CD4-positive, alpha-beta T cell (primary cell): ENCODE measurements at regions of chr4 and their contacts with region 1.

Region 1: DNA sequence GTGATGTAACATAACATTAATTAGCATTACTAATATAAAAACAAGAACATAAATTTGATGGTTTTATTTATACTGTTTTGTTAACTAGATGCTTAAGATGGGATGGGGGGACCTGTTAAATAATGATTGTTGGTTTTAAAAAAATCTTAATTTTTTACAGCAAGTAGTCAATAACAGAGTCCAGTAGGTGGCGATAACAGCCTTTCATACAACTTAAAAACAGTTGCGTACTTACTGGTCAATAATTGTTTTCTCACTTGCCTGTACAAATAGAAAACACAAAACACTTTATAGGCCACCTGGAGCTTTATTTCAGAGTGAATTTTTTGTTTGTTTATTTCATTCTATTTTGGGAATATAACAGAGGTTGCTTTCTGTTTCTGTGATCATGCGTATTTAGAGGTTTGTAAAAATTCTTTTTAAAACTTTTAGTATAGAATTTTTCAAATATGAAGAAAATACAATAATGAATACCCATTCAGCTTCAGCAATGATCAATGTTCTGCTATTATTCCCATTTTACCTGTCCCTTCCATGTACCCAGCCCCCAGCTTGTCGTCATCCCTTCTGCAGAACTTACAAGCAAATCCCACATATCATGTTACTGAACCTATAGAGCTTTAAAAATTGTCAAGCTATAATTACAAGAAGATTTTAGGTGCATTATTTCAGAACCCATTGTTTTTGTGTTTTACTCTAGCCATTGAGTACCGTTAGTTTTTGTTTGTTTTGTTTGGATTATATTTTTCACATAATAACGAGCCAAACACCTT is 97.1 kb downstream of the MRPL1 start:
- DNase-seq: peak in 3 of 14 experiments; percentile 30 to 54 (median 45)
- ATAC-seq: no peak
- H3K4me3 ChIP-seq: no peak overlapping the region
- H3K4me3 Mint-ChIP-seq: no peak overlapping the region
- H3K27ac ChIP-seq: no peak overlapping the region
- H3K27ac Mint-ChIP-seq: no peak overlapping the region
- H3K4me1 ChIP-seq: no peaks in the 10 kb centered on the region
- H3K4me1 Mint-ChIP-seq: peaks cover 7% of the 10 kb centered on the region
- H3K27me3 ChIP-seq: no peaks in the 10 kb centered on the region
- H3K27me3 Mint-ChIP-seq: no peaks in the 10 kb centered on the region
- CTCF ChIP-seq: peak; percentile 72

Region 2: GRCh38 chr4:77765720-77766119 is 194.0 kb before region 1 on chr4:
- CTCF ChIA-PET with region 1: no interaction called
- POLR2A ChIA-PET with region 1: no interaction called
- intact Hi-C with region 1: no loop called
- DNase-seq: no peak
- ATAC-seq: no peak
- H3K4me3 ChIP-seq: no peak overlapping the region
- H3K4me3 Mint-ChIP-seq: no peak overlapping the region
- H3K27ac ChIP-seq: no peak overlapping the region
- H3K27ac Mint-ChIP-seq: peak overlapping the region; percentile 51
- H3K4me1 ChIP-seq: no peaks in the 10 kb centered on the region
- H3K4me1 Mint-ChIP-seq: peaks cover 53% of the 10 kb centered on the region
- H3K27me3 ChIP-seq: no peaks in the 10 kb centered on the region
- H3K27me3 Mint-ChIP-seq: no peaks in the 10 kb centered on the region
- CTCF ChIP-seq: no peak

Region 3: GRCh38 chr4:78268597-78268996 is 308.8 kb after region 1 on chr4:
- CTCF ChIA-PET with region 1: no interaction called
- POLR2A ChIA-PET with region 1: no interaction called
- intact Hi-C with region 1: loop called in 1 of 2 experiments (anchors 2 kb)
- DNase-seq: no peak
- ATAC-seq: no peak
- H3K4me3 ChIP-seq: no peak overlapping the region
- H3K4me3 Mint-ChIP-seq: no peak overlapping the region
- H3K27ac ChIP-seq: no peak overlapping the region
- H3K27ac Mint-ChIP-seq: no peak overlapping the region
- H3K4me1 ChIP-seq: no peaks in the 10 kb centered on the region
- H3K4me1 Mint-ChIP-seq: no peaks in the 10 kb centered on the region
- H3K27me3 ChIP-seq: no peaks in the 10 kb centered on the region
- H3K27me3 Mint-ChIP-seq: peaks cover 6% of the 10 kb centered on the region
- CTCF ChIP-seq: no peak

Region 4: GRCh38 chr4:78517050-78517652 is 557.4 kb after region 1 on chr4:
- CTCF ChIA-PET with region 1: no interaction called
- POLR2A ChIA-PET with region 1: no interaction called
- intact Hi-C with region 1: loop called in 1 of 2 experiments (anchors 10 kb)
- DNase-seq: peak in 2 of 14 experiments; percentile 3 to 7
- ATAC-seq: no peak
- H3K4me3 ChIP-seq: no peak overlapping the region
- H3K4me3 Mint-ChIP-seq: no peak overlapping the region
- H3K27ac ChIP-seq: no peak overlapping the region
- H3K27ac Mint-ChIP-seq: no peak overlapping the region
- H3K4me1 ChIP-seq: no peaks in the 10 kb centered on the region
- H3K4me1 Mint-ChIP-seq: no peaks in the 10 kb centered on the region
- H3K27me3 ChIP-seq: no peaks in the 10 kb centered on the region
- H3K27me3 Mint-ChIP-seq: no peaks in the 10 kb centered on the region
- CTCF ChIP-seq: peak; percentile 35